Left cardiac atrium (tissue), 4 donors: ENCODE measurements at regions of chr14 and their contacts with region 1.

Region 1: DNA sequence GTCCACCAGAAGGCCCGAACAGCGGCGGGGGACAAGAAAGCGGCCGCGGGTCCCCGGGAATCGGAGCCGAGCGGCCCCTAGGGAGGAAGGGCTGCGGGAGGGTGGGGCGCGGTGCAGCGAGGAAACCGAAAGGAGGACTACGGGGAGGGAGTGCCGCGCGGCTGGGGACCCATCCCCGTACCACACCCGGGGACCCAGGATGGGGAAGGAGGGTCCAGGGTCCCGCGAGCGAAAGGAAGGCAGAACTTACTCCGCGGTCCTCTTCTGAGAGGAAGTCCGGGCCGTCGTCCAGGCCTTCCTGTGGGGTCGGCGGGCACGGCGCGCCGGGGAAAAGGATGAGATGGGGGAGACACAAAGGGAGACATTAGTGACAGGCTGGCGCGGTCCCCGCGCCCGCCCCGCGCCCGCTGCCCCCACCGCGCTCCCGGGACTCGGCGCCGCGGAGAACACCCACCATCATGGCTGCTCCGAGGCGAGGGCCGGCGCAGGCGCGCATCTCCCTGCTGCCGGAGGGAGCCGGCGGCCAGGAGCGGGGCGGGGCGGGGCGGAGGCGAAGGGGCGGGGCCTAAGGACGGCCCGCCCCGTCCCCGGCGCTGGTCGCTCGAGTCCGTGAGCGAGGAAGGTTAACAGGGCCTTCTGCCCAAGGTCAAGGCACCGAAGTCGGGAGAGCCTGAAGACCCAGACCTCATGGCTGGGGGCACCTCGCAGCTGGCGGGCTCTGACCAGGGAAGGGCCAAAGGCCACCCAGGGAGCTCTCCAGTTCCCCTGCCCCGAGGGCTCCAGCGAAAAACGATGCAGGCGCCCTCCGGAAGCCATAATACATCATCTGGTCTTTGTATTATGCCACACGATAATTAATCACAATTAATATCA is at the start of gene SNX6:
- DNase-seq: peak; percentile 86
- ATAC-seq: peak; percentile 99
- total RNA-seq, gene SNX6: 56.8 to 58.2 TPM

Region 2: GRCh38 chr14:34409721-34410120 is 220.2 kb before region 1 on chr14:
- intact Hi-C with region 1: no loop called
- DNase-seq: no peak
- ATAC-seq: no peak

Region 3: GRCh38 chr14:34714320-34715126 is 84.6 kb after region 1 on chr14 and contains the start of gene CFL2:
- intact Hi-C with region 1: loop called in 1 of 2 experiments (anchors 5 kb)
- DNase-seq: peak; percentile 86
- ATAC-seq: peak; percentile 97 to 98
- total RNA-seq, gene CFL2: 340 to 356 TPM